Activated CD8-positive, alpha-beta T cell treated with anti-CD3 and anti-CD28 coated beads for 36 hours (primary cell): ENCODE measurements at regions of chr6 and their contacts with region 1.

Region 1: GRCh38 chr6:27772261-27773001 is 139.8 kb downstream of the OR2B2 start:
- DNase-seq: peak; percentile 93
- ATAC-seq: peak; percentile 99
- H3K4me3 Mint-ChIP-seq: peak overlapping the region; percentile 29
- H3K27ac Mint-ChIP-seq: no peak overlapping the region
- H3K4me1 Mint-ChIP-seq: peaks cover 13% of the 10 kb centered on the region
- H3K27me3 Mint-ChIP-seq: peaks cover 14% of the 10 kb centered on the region
- CTCF ChIP-seq: peak; percentile 79

Region 2: DNA sequence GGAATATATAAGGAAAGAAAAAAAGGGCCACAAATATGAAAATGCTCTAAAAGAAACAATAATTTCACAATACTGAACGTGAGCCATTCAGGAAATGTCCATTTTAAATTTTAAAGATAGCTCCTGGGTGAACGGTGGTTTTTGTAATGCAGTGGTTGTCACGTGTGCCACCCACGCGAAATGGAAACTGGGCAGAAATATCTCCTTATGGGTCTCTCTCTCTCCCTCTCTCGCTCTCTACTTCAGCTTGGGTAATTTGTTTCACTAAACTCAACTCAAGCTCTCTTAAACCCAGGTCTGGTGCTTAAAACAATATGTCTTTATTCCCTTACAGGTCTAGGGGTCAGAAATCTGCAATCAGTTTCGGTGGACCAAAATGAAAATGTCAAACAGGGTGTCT is 11.0 kb before region 1 on chr6:
- CTCF ChIA-PET with region 1: interaction called, 29 read pairs
- POLR2A ChIA-PET with region 1: interaction called, 13 read pairs
- intact Hi-C with region 1: no loop called
- DNase-seq: peak; percentile 48
- ATAC-seq: no peak
- H3K4me3 Mint-ChIP-seq: no peak overlapping the region
- H3K27ac Mint-ChIP-seq: peak overlapping the region; percentile 38
- H3K4me1 Mint-ChIP-seq: peaks cover 34% of the 10 kb centered on the region
- H3K27me3 Mint-ChIP-seq: no peaks in the 10 kb centered on the region
- CTCF ChIP-seq: no peak

Region 3: DNA sequence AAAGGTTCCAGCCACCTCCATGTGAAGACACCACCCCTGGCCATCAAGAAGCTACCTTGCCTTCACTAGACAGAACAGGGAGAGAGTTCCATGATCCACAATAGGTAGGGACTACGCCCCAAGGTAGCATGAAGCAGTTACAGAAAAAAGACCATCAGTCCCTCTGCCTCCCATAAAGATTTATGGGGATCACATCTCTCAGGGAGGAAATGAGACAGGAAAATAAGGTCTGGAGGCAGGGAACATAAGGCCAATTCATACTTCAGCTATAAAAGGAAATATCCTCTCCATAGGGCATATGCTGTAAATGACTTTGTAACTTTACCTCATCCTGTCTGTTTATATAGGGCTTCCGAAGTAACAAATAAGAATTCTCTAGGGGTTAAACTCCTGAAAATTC is 10.3 kb after region 1 on chr6:
- CTCF ChIA-PET with region 1: interaction called, 23 read pairs
- POLR2A ChIA-PET with region 1: interaction called, 3 read pairs
- intact Hi-C with region 1: no loop called
- DNase-seq: no peak
- ATAC-seq: no peak
- H3K4me3 Mint-ChIP-seq: no peak overlapping the region
- H3K27ac Mint-ChIP-seq: no peak overlapping the region
- H3K4me1 Mint-ChIP-seq: no peaks in the 10 kb centered on the region
- H3K27me3 Mint-ChIP-seq: peaks cover 19% of the 10 kb centered on the region
- CTCF ChIP-seq: no peak

Region 4: GRCh38 chr6:27830212-27830599 is 57.8 kb after region 1 on chr6:
- CTCF ChIA-PET with region 1: no interaction called
- POLR2A ChIA-PET with region 1: no interaction called
- intact Hi-C with region 1: no loop called
- DNase-seq: no peak
- ATAC-seq: no peak
- H3K4me3 Mint-ChIP-seq: peak overlapping the region; percentile 88
- H3K27ac Mint-ChIP-seq: peak overlapping the region; percentile 98
- H3K4me1 Mint-ChIP-seq: peaks cover 31% of the 10 kb centered on the region
- H3K27me3 Mint-ChIP-seq: no peaks in the 10 kb centered on the region
- CTCF ChIP-seq: no peak